Ascending aorta (tissue), 2 donors: ENCODE measurements at regions of chr3 and their contacts with region 1.

Region 1: DNA sequence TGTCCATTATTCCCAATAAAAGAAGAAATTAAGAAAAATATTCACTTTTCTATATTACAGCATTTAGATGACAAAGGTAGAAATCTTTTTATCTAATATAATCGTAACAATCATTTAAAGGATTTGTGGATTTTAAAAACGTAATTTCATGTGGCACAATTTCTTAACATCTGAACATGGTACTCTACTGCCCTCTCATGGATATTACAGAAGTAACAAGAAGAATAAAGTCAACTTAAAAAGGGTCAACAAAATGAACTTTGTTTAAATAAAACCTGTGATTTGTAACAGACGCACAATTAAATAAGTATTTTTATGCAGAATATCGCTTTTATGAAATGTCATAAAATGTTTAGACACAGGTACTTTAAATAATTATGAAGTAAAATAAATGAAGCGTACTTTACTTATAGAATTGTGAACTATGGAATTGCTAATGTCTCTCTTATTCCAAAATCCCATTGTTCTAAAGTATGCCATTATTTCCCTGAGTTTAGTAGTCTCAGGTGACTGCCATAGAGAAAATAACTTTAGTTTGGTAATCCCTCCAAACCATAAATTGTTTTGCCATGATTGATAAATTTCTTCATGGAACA is 366.8 kb upstream of the ZNF385D start:
- DNase-seq: no peak
- H3K4me3 ChIP-seq: no peak overlapping the region
- H3K27ac ChIP-seq: no peak overlapping the region
- H3K4me1 ChIP-seq: no peaks in the 10 kb centered on the region
- H3K27me3 ChIP-seq: no peaks in the 10 kb centered on the region
- CTCF ChIP-seq: peak; percentile 33 to 61 (median 51)

Region 2: DNA sequence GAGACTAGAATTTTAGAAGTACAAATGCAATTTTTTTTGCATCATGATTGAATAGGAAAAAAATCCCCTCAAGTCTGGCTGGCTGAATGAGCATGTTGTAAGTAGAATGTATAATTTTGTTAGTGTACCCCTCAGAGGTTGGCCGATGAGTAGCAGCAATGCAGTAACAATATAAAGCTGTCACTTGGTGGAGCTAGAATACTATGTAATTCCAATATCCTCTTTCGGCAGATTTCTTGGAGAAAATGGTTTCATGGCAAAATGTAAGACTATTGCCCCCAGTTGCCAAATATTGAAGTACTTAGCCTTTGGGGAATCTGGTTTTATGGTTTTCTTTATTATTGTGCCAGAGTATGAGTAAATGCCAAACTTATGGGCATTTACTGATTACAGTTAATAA is 1892.1 kb before region 1 on chr3:
- intact Hi-C with region 1: loop called (anchors 10 kb)
- DNase-seq: no peak
- H3K4me3 ChIP-seq: no peak overlapping the region
- H3K27ac ChIP-seq: no peak overlapping the region
- H3K4me1 ChIP-seq: no peaks in the 10 kb centered on the region
- H3K27me3 ChIP-seq: no peaks in the 10 kb centered on the region
- CTCF ChIP-seq: peak; percentile 23 to 62 (median 53)

Region 3: GRCh38 chr3:20340324-20340928 is 1777.4 kb before region 1 on chr3:
- intact Hi-C with region 1: loop called (anchors 2 kb)
- DNase-seq: peak; percentile 9 to 79
- H3K4me3 ChIP-seq: peak overlapping the region in 1 of 2 donors; percentile 12
- H3K27ac ChIP-seq: no peak overlapping the region
- H3K4me1 ChIP-seq: no peaks in the 10 kb centered on the region
- H3K27me3 ChIP-seq: no peaks in the 10 kb centered on the region
- CTCF ChIP-seq: peak; percentile 58 to 93 (median 89)

Region 4: DNA sequence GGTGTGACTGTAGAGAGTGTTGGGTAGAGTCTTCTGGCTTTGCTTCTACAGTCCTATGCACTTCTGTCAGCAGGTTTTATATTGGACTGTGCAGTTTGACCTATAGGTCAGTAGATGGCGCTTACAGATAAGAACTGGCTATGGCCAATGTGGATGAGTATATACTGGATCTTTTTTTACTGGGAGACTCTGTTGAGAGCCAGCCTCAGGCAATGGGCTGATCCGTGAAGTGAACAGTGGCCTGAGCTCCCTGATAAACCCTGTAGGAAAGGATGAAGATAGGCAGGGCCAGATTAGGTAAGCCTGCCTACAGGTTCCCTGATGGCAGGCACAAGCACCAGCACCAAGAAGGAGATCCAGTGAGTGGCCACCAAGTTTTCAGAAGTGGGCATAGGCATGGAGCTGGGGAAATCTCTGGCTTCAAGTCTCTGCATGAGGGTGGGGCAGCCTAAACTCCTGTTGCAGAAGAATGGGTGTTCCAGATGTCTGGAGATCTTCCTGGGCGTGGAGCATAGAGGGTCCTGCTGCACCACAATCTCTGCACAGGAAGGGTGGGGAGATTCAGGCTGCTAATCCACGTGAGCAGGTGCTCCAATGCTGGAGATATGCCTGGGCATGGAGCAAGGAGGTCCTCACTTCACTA is 1605.9 kb before region 1 on chr3:
- intact Hi-C with region 1: loop called (anchors 5 kb)
- DNase-seq: no peak
- H3K4me3 ChIP-seq: no peak overlapping the region
- H3K27ac ChIP-seq: no peak overlapping the region
- H3K4me1 ChIP-seq: no peaks in the 10 kb centered on the region
- H3K27me3 ChIP-seq: no peaks in the 10 kb centered on the region
- CTCF ChIP-seq: peak; percentile 40 to 64 (median 50)